Common myeloid progenitor, CD34-positive (primary cell): ENCODE measurements at regions of chr6 and their contacts with region 1.

Region 1: GRCh38 chr6:31197559-31198305 is 27.2 kb upstream of the POU5F1 start:
- DNase-seq: peak; percentile 95 to 99 (median 98)
- H3K4me3 ChIP-seq: peak overlapping the region; percentile 71 to 98 (median 84)
- H3K27ac ChIP-seq: peak overlapping the region; percentile 95 to 98
- H3K4me1 ChIP-seq: peaks cover 5 to 47% (median 28%) of the 10 kb centered on the region in 4 experiments
- H3K27me3 ChIP-seq: no peaks in the 10 kb centered on the region

Region 2: GRCh38 chr6:30821862-30822782 is 375.6 kb before region 1 on chr6:
- CTCF ChIA-PET with region 1: no interaction called
- POLR2A ChIA-PET with region 1: no interaction called
- DNase-seq: peak; percentile 46 to 72 (median 61)
- H3K4me3 ChIP-seq: no peak overlapping the region
- H3K27ac ChIP-seq: no peak overlapping the region
- H3K4me1 ChIP-seq: no peaks in the 10 kb centered on the region
- H3K27me3 ChIP-seq: peaks cover 0 to 5% (median 0%) of the 10 kb centered on the region in 5 experiments

Region 3: GRCh38 chr6:31128093-31128676 is 69.5 kb before region 1 on chr6:
- CTCF ChIA-PET with region 1: interaction called, 28 read pairs
- POLR2A ChIA-PET with region 1: no interaction called
- DNase-seq: peak; percentile 36 to 68 (median 53)
- H3K4me3 ChIP-seq: no peak overlapping the region
- H3K27ac ChIP-seq: no peak overlapping the region
- H3K4me1 ChIP-seq: peaks cover 0 to 16% (median 11%) of the 10 kb centered on the region in 4 experiments
- H3K27me3 ChIP-seq: no peaks in the 10 kb centered on the region

Region 4: GRCh38 chr6:31139599-31139998 is 58.1 kb before region 1 on chr6:
- CTCF ChIA-PET with region 1: interaction called, 31 read pairs
- POLR2A ChIA-PET with region 1: no interaction called
- DNase-seq: no peak
- H3K4me3 ChIP-seq: no peak overlapping the region
- H3K27ac ChIP-seq: no peak overlapping the region
- H3K4me1 ChIP-seq: peaks cover 0 to 7% (median 4%) of the 10 kb centered on the region in 4 experiments
- H3K27me3 ChIP-seq: peaks cover 0 to 2% (median 0%) of the 10 kb centered on the region in 5 experiments

Region 5: DNA sequence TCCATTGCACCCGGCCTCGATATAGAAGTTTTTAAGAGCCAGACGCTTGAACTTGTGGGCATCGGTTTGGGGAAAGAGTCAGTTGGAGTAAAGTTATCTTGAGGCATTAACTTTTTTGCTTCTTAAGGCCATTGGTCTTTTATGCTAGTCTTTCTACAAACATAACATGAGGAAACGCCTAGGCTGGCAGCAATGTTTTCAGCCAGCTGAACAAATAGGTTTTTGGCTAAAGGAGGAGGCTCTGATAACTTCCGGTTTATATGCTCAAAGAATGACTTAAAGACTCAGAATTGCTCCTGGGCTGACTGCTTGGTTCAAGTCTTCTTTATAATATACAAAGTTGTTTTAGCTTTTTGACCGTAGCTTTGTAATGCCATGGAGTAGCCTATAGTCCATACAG is 28.0 kb after region 1 on chr6:
- CTCF ChIA-PET with region 1: no interaction called
- POLR2A ChIA-PET with region 1: no interaction called
- DNase-seq: no peak
- H3K4me3 ChIP-seq: no peak overlapping the region
- H3K27ac ChIP-seq: no peak overlapping the region
- H3K4me1 ChIP-seq: peaks cover 0 to 20% (median 12%) of the 10 kb centered on the region in 4 experiments
- H3K27me3 ChIP-seq: no peaks in the 10 kb centered on the region

Region 6: DNA sequence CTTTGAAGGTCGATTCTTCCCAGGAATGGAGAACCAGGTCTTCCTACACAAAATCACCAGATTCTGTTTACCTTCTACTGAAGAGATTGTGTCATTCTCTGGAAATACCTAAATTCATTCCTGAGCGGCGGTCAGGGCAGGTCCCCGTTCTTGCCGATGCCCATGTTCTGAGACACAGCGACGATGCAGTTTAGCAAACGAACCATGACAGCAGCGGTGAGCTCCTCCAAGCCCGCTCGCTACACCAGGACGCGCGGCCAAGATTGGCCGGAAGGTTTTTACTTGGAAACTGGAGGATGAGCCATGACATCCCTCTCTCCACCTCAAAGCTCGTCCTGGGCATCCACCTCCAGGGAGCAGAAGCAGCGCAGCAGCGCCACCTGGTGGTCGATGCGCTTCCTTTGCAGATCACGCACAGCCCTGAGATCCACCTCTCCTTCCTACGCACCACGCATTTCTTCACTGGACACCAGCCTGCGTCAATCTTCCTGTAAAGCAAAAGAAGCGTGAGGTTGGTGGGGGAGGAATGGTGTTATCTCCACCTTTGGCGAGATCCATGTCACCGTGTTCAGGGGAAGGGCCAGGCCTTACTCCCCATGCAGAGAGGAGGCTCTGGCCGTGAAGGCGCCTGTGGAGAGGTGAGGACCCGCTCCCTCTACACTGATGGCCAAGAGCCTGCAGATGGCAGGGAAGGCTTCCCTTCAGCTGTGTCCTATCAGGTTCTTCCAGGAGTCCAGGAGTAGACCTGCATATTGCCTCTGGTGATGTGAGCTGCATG is 169.2 kb after region 1 on chr6:
- CTCF ChIA-PET with region 1: interaction called, 34 read pairs
- POLR2A ChIA-PET with region 1: no interaction called
- DNase-seq: peak; percentile 86 to 92 (median 88)
- H3K4me3 ChIP-seq: peak overlapping the region in 6 of 7 experiments; percentile 3 to 85 (median 60)
- H3K27ac ChIP-seq: no peak overlapping the region
- H3K4me1 ChIP-seq: peaks cover 0 to 8% (median 7%) of the 10 kb centered on the region in 4 experiments
- H3K27me3 ChIP-seq: peaks cover 0 to 5% (median 3%) of the 10 kb centered on the region in 5 experiments

Region 7: GRCh38 chr6:31378062-31378720 is 180.5 kb after region 1 on chr6:
- CTCF ChIA-PET with region 1: interaction called, 28 read pairs
- POLR2A ChIA-PET with region 1: interaction called, 4 read pairs
- DNase-seq: no peak
- H3K4me3 ChIP-seq: no peak overlapping the region
- H3K27ac ChIP-seq: no peak overlapping the region
- H3K4me1 ChIP-seq: no peaks in the 10 kb centered on the region
- H3K27me3 ChIP-seq: peaks cover 0 to 2% (median 0%) of the 10 kb centered on the region in 5 experiments